ENCODE measurements at regions of chr12 and their contacts with region 1.

Region 1: GRCh38 chr12:89363084-89363483 is 10.8 kb upstream of the DUSP6 start:
- DNase-seq: no peak
- H3K4me3 ChIP-seq: no peak overlapping the region
- H3K27ac ChIP-seq: no peak overlapping the region
- H3K4me1 ChIP-seq: no peaks in the 10 kb centered on the region
- H3K27me3 ChIP-seq: no peaks in the 10 kb centered on the region
- CTCF ChIP-seq: no peak
- POLR2A ChIP-seq: no peak

Region 2: GRCh38 chr12:89439941-89440340 is 76.9 kb after region 1 on chr12:
- intact Hi-C with region 1: no loop called
- DNase-seq: no peak
- H3K4me3 ChIP-seq: no peak overlapping the region
- H3K27ac ChIP-seq: no peak overlapping the region
- H3K4me1 ChIP-seq: no peaks in the 10 kb centered on the region
- H3K27me3 ChIP-seq: no peaks in the 10 kb centered on the region
- CTCF ChIP-seq: no peak
- POLR2A ChIP-seq: no peak

Region 3: DNA sequence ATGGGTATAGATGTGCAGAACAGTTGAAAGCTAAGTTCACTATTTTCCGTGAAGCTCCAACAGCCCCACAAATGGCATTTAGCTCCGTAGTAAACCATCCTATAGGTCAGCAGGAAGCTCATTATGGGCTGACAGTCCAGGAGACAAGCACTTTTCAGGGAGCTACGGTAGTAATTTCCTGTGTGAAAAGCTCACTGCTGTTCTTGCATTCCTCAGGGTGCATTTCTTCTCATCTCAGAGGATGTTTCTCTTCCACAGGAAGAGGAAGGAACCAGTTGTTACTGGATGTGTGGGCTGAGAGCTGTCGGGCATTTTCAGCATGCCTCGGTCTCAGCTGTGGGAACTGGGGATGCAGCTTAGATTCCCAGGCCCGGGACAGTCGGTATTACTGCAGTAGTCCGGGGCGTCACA is 88.8 kb after region 1 on chr12:
- intact Hi-C with region 1: loop called in 1 of 2 experiments (anchors 10 kb)
- DNase-seq: peak in 6 of 7 donors; percentile 20 to 65 (median 28)
- H3K4me3 ChIP-seq: no peak overlapping the region
- H3K27ac ChIP-seq: peak overlapping the region in 3 of 5 donors; percentile 28 to 78 (median 62)
- H3K4me1 ChIP-seq: peaks cover 0 to 38% of the 10 kb centered on the region in 2 donors
- H3K27me3 ChIP-seq: no peaks in the 10 kb centered on the region
- CTCF ChIP-seq: no peak
- POLR2A ChIP-seq: no peak

Measured in adrenal gland (tissue), 19 donors.